Tibial artery (tissue), 4 donors: ENCODE measurements at regions of chr2 and their contacts with region 1.

Region 1: DNA sequence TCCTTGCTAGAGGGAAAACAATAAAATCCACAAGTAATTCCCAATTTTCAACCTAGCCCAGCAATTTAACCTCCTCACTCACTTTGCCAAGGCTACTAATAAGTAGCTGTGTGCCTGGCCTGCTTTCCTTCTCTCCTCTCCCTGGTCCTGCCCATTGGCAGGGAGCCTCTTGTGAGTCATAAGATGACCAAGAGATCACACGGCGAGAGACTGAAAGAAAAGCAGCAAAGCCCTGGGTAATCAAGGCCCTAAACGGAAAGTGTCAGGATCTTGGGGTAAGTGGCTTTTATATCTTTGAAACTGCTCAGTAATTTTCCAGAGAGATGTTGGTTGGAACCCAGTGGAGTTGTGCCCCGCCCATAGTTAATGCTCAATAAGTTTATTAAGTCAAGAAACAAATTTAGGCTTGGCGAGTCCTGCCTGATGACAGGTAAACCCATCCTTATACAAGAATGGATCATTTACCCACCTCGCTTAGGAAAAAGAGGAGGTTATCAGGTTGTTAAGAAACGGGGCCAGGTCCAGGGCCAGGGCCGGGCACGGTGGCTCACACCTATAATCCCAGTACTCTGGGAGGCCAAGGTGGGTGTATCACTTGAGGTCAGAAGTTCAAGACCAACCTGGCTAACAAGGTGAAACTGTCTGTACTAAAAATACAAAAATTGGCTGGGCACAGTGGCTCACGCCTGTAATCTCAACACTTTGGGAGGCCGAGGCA is 10.0 kb upstream of the ADAM17 start:
- DNase-seq: peak; percentile 96 to 97
- H3K4me3 ChIP-seq: peak overlapping the region in 1 of 2 donors; percentile 5
- H3K27ac ChIP-seq: peak overlapping the region; percentile 91 to 94
- H3K4me1 ChIP-seq: peaks cover 0 to 21% (median 17%) of the 10 kb centered on the region in 4 donors
- H3K27me3 ChIP-seq: no peaks in the 10 kb centered on the region
- CTCF ChIP-seq: no peak

Region 2: DNA sequence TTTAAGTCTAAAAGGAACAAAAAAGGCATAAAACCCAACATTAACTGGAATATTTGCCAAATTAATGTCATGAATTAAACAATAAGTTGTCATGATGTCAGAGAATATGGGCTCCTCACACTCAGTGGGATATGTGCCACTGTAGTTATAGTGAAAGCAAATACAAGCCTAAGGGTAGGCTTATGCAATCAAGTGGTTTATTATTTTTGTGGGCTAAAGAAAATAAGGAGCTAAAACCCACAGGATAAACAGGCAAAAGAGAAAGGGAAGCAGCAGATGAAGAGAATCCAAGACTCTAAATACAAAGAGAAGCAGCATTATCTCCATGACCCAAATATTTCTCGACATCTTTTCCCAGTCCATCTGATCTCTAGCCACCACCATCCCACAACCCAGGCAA is 47.7 kb after region 1 on chr2:
- intact Hi-C with region 1: no loop called
- DNase-seq: no peak
- H3K4me3 ChIP-seq: no peak overlapping the region
- H3K27ac ChIP-seq: peak overlapping the region; percentile 17 to 39
- H3K4me1 ChIP-seq: peaks cover 0 to 85% (median 45%) of the 10 kb centered on the region in 4 donors
- H3K27me3 ChIP-seq: no peaks in the 10 kb centered on the region
- CTCF ChIP-seq: no peak

Region 3: GRCh38 chr2:9627310-9627709 is 61.7 kb after region 1 on chr2:
- intact Hi-C with region 1: no loop called
- DNase-seq: no peak
- H3K4me3 ChIP-seq: no peak overlapping the region
- H3K27ac ChIP-seq: no peak overlapping the region
- H3K4me1 ChIP-seq: peaks cover 0 to 86% (median 42%) of the 10 kb centered on the region in 4 donors
- H3K27me3 ChIP-seq: no peaks in the 10 kb centered on the region
- CTCF ChIP-seq: no peak

Region 4: GRCh38 chr2:9638532-9638931 is 72.9 kb after region 1 on chr2:
- intact Hi-C with region 1: no loop called
- DNase-seq: peak; percentile 89 to 90
- H3K4me3 ChIP-seq: no peak overlapping the region
- H3K27ac ChIP-seq: peak overlapping the region in 1 of 2 donors; percentile 20
- H3K4me1 ChIP-seq: peaks cover 0 to 13% (median 6%) of the 10 kb centered on the region in 4 donors
- H3K27me3 ChIP-seq: no peaks in the 10 kb centered on the region
- CTCF ChIP-seq: no peak

Region 5: GRCh38 chr2:9693211-9693520 is 127.6 kb after region 1 on chr2:
- intact Hi-C with region 1: loop called (anchors 10 kb)
- DNase-seq: peak; percentile 85 to 92
- H3K4me3 ChIP-seq: peak overlapping the region; percentile 22 to 39
- H3K27ac ChIP-seq: peak overlapping the region; percentile 86 to 87
- H3K4me1 ChIP-seq: peaks cover 0 to 16% (median 10%) of the 10 kb centered on the region in 4 donors
- H3K27me3 ChIP-seq: no peaks in the 10 kb centered on the region
- CTCF ChIP-seq: no peak

Region 6: GRCh38 chr2:10477443-10478297 is 912.1 kb after region 1 on chr2:
- intact Hi-C with region 1: no loop called
- DNase-seq: no peak
- H3K4me3 ChIP-seq: no peak overlapping the region
- H3K27ac ChIP-seq: no peak overlapping the region
- H3K4me1 ChIP-seq: no peaks in the 10 kb centered on the region
- H3K27me3 ChIP-seq: peaks cover 0 to 9% of the 10 kb centered on the region in 2 donors
- CTCF ChIP-seq: no peak